ENCODE measurements at regions of chr1 and their contacts with region 1.

Region 1: DNA sequence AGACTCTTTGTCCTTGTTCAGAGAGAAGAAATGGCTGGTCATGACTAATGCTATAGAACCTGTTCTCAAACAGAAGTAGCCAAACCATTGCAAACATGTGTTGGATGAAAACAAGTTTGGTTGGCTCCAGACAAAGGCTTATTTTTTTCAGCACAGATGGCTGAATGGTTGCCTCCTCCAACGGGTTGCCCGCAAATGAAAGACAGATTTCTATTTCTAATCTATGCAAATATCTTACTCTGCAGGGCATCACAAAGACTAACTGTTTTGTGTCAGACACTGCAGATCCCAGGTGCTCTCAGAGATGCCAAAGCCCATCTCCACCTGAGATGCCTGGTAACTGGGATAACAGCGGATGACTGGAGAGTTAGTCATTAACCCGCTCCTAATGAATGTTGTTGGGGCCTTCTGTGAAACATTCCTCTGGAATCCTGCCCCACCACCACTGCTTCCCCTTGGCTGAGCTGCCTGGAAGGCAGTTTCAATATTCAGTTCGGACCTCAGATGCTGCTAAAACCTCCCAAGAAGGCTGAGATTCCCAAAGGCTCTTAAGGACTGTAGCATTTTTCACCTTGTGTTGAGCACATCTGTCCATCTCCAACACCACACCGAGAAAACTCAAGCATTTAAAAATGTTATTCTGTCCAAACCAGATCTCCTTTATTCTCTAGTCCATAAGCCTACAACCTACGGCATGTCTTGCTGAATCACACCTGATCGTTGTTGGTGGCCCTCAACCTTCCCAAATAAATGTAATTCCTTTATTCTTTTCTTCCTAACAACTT is 104.4 kb downstream of the PTPN14 start:
- DNase-seq: peak; percentile 85 to 99
- H3K4me3 ChIP-seq: peak overlapping the region; percentile 44; the same call in 1 of the 2 replicates
- H3K27ac ChIP-seq: peak overlapping the region; percentile 90
- H3K4me1 ChIP-seq: peaks cover 50% of the 10 kb centered on the region
- H3K27me3 ChIP-seq: no peaks in the 10 kb centered on the region
- CTCF ChIP-seq: no peak

Region 2: DNA sequence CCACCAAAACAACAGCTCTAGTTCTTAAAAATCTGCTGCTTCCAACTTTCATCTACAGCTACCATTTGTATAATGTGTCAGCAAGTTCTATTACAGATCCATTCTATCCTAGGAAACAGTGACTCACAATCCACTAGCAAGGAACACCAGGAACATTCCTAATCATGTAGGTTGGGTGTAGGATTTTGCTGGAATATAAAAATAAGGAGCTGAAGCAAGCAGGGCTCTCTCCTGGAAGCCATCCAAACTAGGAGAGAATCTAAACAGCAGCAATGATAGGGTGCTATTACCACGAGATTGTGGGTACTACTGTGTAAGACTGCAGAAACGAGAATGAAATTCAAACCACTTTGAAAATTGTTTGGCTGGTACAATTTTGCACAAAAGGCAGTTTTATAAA is 30.5 kb before region 1 on chr1:
- CTCF ChIA-PET with region 1: no interaction called
- POLR2A ChIA-PET with region 1: no interaction called
- intact Hi-C with region 1: loop called (anchors 2 kb)
- DNase-seq: no peak
- H3K4me3 ChIP-seq: no peak overlapping the region
- H3K27ac ChIP-seq: no peak overlapping the region
- H3K4me1 ChIP-seq: no peaks in the 10 kb centered on the region
- H3K27me3 ChIP-seq: no peaks in the 10 kb centered on the region
- CTCF ChIP-seq: no peak

Region 3: GRCh38 chr1:214476958-214477870 is 30.2 kb after region 1 on chr1:
- CTCF ChIA-PET with region 1: no interaction called
- POLR2A ChIA-PET with region 1: interaction called, 11 read pairs
- intact Hi-C with region 1: loop called (anchors 2 kb)
- DNase-seq: peak in 1 of 2 experiments; percentile 39
- H3K4me3 ChIP-seq: no peak overlapping the region
- H3K27ac ChIP-seq: no peak overlapping the region
- H3K4me1 ChIP-seq: peaks cover 35% of the 10 kb centered on the region
- H3K27me3 ChIP-seq: no peaks in the 10 kb centered on the region
- CTCF ChIP-seq: no peak

Region 4: GRCh38 chr1:214514032-214514818 is 67.3 kb after region 1 on chr1:
- CTCF ChIA-PET with region 1: no interaction called
- POLR2A ChIA-PET with region 1: no interaction called
- intact Hi-C with region 1: loop called (anchors 2 kb)
- DNase-seq: no peak
- H3K4me3 ChIP-seq: no peak overlapping the region
- H3K27ac ChIP-seq: no peak overlapping the region
- H3K4me1 ChIP-seq: peaks cover 55% of the 10 kb centered on the region
- H3K27me3 ChIP-seq: no peaks in the 10 kb centered on the region
- CTCF ChIP-seq: no peak

Region 5: DNA sequence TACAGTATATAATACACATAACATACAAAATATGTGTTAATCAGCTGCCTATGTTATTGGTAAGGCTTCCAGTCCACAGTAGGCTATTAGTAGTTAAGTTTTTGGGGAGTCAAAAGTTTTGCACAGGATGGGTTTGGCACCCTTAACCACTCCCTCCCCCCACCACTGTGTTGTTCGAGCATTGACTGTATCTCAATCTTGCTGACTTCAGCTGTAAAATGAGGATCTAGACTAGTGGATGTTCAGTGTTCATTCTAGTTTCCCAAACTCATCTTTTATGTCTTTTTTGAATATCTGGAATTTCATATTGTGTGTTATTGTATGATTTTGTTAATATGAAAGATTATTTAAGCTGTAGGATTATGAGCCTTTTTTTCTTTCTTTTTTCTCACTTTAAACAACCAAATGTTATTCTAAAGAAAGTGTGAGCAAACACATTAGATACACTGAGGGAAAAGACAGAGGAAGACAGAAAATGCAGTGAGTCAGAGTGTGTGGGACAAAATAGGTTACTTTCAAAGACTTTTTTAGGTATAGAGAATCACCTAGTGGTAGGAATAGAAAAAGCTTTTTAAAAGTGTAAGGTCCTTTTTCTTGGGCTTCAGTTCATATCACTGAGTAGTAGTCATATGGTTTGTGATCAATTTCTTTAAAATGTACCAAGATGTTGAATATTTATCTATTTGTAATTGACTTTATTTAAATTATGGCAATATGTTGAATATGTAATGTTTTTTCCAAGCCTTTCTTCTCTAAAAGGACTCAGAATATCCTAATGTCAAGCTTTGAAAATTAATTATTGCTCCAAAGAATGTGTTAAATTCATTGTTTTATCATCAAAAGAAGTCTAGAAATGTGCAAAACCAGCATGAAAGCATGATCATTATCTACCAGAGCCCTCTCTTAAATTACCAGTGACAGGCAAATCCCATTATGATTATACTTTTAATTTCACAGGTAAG is 138.1 kb after region 1 on chr1:
- CTCF ChIA-PET with region 1: no interaction called
- POLR2A ChIA-PET with region 1: no interaction called
- intact Hi-C with region 1: loop called (anchors 1 kb)
- DNase-seq: peak in 1 of 2 experiments; percentile 73
- H3K4me3 ChIP-seq: no peak overlapping the region
- H3K27ac ChIP-seq: no peak overlapping the region
- H3K4me1 ChIP-seq: peaks cover 30% of the 10 kb centered on the region
- H3K27me3 ChIP-seq: no peaks in the 10 kb centered on the region
- CTCF ChIP-seq: peak; percentile 86

Measured in PC-9 (cell line).